ENCODE measurements at regions of chr14 and their contacts with region 1.

Region 1: GRCh38 chr14:77376771-77377501 is at the starts of genes SAMD15 and TMED8:
- DNase-seq: peak; percentile 82 to 91 (median 83)
- H3K4me3 ChIP-seq: peak within 1 kb of the TSS; percentile 5 to 97 (median 61)
- H3K27ac ChIP-seq: peak within 1 kb of the TSS in 4 of 5 donors; percentile 29 to 89 (median 73)
- H3K4me1 ChIP-seq: peaks cover 11 to 26% of the 10 kb centered on the region in 2 donors
- H3K27me3 ChIP-seq: no peaks in the 10 kb centered on the region
- CTCF ChIP-seq: peak in 5 of 6 experiments; percentile 6 to 35 (median 30)
- POLR2A ChIP-seq: peak in 1 of 2 donors; percentile 58
- total RNA-seq, gene SAMD15: 0.24 to 4.6 (median 1.5) TPM
- total RNA-seq, gene TMED8: 15.3 to 23.6 (median 20.8) TPM

Region 2: GRCh38 chr14:77320238-77320935 is 56.5 kb before region 1 on chr14 and contains the start of gene POMT2:
- intact Hi-C with region 1: loop called in 1 of 2 experiments (anchors 10 kb)
- DNase-seq: peak; percentile 95 to 98 (median 96)
- H3K4me3 ChIP-seq: peak within 1 kb of the TSS; percentile 72 to 95 (median 86)
- H3K27ac ChIP-seq: peak within 1 kb of the TSS; percentile 96 to 99 (median 99)
- H3K4me1 ChIP-seq: peaks cover 12 to 40% of the 10 kb centered on the region in 2 donors
- H3K27me3 ChIP-seq: no peaks in the 10 kb centered on the region
- CTCF ChIP-seq: peak in 5 of 6 experiments; percentile 31 to 74 (median 53)
- POLR2A ChIP-seq: peak; percentile 72 to 81
- total RNA-seq, gene POMT2: 14.0 to 48.8 (median 40.0) TPM

Region 3: DNA sequence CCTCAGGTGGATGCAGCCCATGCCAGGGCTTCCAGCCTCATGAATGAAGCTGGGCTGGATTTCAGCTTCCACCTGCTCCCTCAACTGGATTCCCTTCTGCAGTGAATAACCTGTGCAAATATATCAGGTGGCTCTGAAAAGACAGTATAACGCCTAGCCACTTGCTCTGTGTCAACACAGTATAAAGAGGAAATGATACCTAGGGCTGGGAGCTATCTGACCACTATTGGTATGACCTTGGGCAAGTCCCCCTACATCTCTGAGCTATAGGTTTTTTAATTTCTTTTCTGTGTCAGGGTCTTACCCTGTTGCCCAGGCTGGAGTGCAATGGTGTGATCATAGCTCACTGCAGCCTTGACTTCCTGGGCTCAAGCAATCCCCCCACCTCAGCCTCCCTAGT is 101.9 kb after region 1 on chr14:
- intact Hi-C with region 1: no loop called
- DNase-seq: no peak
- H3K4me3 ChIP-seq: no peak overlapping the region
- H3K27ac ChIP-seq: no peak overlapping the region
- H3K4me1 ChIP-seq: no peaks in the 10 kb centered on the region
- H3K27me3 ChIP-seq: no peaks in the 10 kb centered on the region
- CTCF ChIP-seq: no peak
- POLR2A ChIP-seq: no peak